Left cardiac atrium (tissue), 4 donors: ENCODE measurements at regions of chr2 and their contacts with region 1.

Region 1: GRCh38 chr2:101831351-101831865 is 133.9 kb downstream of the MAP4K4 start:
- DNase-seq: peak; percentile 77
- ATAC-seq: peak; percentile 76 to 87

Region 2: GRCh38 chr2:101341901-101342624 is 489.3 kb before region 1 on chr2:
- intact Hi-C with region 1: loop called in 1 of 2 experiments (anchors 5 kb)
- DNase-seq: peak; percentile 78
- ATAC-seq: peak; percentile 70 to 76

Region 3: DNA sequence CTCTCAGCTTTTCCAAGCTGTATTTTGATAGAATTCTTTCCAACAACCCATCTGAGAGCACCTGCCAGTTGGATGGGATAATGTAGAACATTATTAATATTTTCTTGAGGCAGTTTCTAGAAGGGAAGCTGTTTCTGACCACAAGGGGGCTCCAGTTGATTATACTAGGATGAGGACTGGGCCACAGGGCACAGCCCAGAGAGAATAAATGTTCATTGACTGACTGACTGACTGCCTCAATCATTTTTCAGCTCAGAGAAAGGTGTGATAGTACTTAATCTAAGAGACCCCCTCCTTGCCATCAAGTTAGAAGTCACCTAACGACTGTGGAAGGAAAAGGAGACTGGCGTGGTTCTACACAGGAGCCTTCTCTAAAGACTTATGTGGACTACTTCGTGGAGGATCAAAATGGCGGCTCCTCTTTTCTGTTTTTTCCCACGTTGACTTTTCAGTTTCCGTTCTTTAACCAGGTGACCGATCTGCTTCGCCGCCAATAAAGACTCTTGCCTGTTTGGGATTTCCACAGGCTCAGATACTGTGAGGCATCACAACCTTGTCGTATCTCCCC is 412.2 kb before region 1 on chr2:
- intact Hi-C with region 1: loop called (anchors 5 to 10 kb)
- DNase-seq: peak; percentile 59
- ATAC-seq: peak; percentile 65 to 83

Region 4: DNA sequence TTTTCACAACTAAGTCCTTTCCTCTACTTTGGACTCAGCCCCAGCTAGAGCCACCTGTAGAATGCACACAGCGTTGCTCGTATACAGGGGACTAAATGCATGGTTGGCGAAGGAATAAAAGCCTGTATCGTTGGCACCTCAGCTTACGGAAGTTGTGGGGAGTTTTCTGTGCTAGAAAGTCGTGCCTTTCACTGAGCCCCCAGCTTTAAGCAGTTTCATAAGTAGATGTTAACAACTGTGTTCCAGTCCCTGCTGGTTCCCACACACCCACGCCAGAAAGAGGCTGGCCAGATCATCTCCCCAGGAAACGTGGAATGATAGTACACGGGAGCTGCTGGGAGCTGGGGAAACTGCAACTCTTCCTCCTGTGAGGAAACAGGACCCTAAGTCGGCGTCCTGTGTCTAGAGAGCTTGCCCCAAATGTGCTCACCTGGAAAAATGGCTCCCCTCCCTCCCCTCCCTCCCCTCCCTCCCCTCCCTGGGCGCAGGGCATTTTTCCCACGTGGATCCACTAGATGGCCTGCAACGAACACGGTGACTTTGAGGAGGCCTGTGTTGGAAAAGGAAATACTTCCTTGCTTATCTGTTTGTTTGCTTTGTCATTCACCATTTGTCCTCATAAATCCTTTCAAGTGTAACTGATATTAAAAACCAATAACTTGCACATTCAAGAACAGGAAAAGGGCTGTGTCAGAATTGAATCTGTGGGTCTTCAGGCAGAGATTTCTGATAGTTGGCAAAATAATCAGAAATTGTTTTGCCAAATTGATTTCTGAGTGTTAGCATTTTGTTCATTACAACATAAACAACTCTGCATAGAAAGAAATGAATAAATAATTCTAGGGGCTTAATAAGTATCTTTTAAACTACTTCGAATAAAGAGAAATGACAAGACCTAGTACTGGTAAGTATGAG is 312.6 kb before region 1 on chr2:
- intact Hi-C with region 1: loop called (anchors 5 kb)
- DNase-seq: peak; percentile 34
- ATAC-seq: peak; percentile 66 to 86